Aorta (tissue), 5 donors: ENCODE measurements at regions of chr19 and their contacts with region 1.

Region 1: DNA sequence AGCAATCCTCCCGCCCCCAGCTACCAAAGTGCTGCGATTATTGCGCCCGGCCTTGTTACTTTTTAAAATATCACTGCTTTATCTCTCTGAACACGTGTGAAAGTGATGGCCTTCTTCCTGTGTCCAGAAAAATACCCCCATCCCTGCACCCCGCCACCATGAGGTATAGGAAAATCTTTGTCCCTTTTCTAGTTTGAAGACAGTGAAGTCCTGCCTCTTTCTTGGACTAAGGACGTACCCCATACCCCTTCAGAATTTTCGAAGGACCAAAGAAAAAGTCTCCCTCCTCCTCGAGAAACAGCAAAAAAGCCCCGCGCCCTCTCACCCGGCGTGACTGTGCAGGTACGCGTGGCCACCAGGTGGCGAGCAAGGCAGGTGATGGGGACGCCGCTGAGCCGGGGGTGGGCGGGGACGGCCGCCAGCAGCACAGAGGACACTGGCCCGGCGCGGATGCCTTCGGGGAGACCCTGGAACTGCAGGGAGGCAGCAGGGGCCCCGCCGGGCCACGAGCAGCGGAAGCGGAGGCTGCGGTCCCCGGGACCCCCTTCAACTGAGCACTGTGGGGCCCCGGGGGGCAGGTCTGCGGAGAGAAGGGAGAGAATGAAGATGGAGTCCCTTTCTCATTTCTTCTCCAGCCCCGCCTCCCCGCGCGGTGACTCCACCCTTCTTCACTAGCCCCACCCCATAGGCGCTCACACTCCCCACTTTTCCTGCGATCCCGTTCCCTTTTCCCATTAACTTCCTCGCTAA is 3.2 kb downstream of the VSIG10L start:
- DNase-seq: peak; percentile 89 to 96
- ATAC-seq: peak; percentile 87
- H3K4me3 ChIP-seq: peak overlapping the region; percentile 7 to 16
- H3K27ac ChIP-seq: peak overlapping the region in 1 of 2 donors; percentile 8
- H3K4me1 ChIP-seq: no peaks in the 10 kb centered on the region
- H3K27me3 ChIP-seq: no peaks in the 10 kb centered on the region

Region 2: DNA sequence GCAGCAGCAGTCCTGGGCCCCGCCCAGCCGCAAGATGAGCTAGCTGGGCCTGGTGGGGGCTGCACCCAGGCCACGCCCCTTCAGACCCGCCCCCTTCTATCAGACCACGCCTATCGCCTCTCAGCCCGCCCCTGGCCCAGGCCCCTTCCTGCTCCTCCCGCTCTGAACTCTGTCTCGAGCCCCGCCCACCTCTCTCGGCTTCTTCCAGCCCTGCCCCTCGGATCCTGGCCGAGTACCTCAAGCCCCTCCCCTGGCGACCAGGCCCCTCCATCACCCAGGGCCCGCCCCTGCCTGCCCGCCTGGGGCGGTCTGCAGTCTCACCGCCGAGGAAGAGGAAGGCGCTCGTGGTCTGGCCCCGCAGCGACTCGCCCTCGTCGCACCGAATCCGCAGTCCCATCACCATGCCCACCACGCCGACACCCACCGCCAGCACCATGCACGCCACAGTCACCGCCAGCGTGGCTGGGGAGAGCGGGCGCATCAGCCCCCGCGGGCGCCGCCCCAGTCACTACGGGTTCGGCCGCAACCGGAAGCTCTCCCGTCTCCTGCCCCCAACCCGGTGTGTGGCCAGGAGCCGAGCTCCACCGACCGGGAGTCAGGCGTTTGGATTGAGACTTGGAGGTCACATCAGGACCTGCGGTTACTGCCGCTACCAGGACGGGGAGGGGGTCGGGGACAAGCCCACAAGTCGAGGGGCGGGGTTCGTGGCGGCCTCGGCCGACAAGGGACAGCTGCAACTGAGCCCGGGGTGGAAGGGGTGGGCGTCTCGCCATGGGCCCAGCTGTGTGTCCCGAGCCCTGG is 29.0 kb after region 1 on chr19:
- intact Hi-C with region 1: loop called (anchors 1 to 2 kb)
- DNase-seq: peak; percentile 100
- ATAC-seq: peak; percentile 96
- H3K4me3 ChIP-seq: peak overlapping the region; percentile 4 to 65
- H3K27ac ChIP-seq: peak overlapping the region in 1 of 2 donors; percentile 4
- H3K4me1 ChIP-seq: no peaks in the 10 kb centered on the region
- H3K27me3 ChIP-seq: no peaks in the 10 kb centered on the region

Region 3: GRCh38 chr19:51393959-51394836 is 55.5 kb after region 1 on chr19:
- intact Hi-C with region 1: loop called (anchors 5 kb)
- DNase-seq: peak; percentile 95 to 96
- ATAC-seq: peak; percentile 96
- H3K4me3 ChIP-seq: peak overlapping the region; percentile 13 to 30
- H3K27ac ChIP-seq: peak overlapping the region in 1 of 2 donors; percentile 7
- H3K4me1 ChIP-seq: no peaks in the 10 kb centered on the region
- H3K27me3 ChIP-seq: no peaks in the 10 kb centered on the region

Region 4: DNA sequence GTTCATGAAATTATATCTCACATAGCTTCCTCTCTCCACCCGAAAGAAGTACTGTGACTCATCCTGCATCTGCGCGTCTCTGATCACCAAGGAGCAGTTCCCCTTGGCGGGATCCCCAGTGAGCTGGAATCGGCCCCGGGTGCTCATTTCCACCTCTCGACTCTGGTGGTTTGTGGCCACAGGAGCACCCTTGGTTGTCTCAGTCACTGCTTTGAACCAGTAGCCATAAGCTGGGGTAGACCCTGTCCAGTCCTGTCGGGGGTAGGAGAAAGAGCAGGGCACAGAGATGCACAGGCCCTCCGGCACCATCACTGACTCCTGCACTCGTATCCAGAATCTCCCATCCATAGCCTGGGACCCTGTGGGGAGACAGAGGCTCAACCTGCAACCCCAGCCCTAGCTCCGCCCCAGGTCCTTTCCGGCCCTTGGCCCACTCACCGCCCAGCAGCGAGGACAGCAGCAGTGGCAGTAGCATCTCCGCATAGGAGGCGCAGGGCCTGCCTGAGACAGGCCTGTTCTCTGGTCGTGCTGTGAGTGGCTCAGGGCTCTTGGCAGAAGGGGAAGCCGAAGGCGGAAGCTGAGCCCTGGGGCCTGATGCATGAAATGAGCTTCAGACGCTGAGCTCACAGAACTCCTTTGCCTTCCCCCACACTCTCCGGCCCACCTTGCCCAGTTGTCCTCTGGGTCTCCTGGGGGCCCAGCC is 78.5 kb after region 1 on chr19 and contains the start of gene SIGLEC10:
- intact Hi-C with region 1: no loop called
- DNase-seq: peak; percentile 80 to 84
- ATAC-seq: peak; percentile 19
- H3K4me3 ChIP-seq: no peak within 1 kb of the TSS
- H3K27ac ChIP-seq: no peak within 1 kb of the TSS
- H3K4me1 ChIP-seq: no peaks in the 10 kb centered on the region
- H3K27me3 ChIP-seq: no peaks in the 10 kb centered on the region
- total RNA-seq, gene SIGLEC10: 4.0 to 4.6 TPM

Region 5: GRCh38 chr19:51439021-51439465 is 100.3 kb after region 1 on chr19:
- intact Hi-C with region 1: loop called (anchors 2 kb)
- DNase-seq: no peak
- ATAC-seq: no peak
- H3K4me3 ChIP-seq: no peak overlapping the region
- H3K27ac ChIP-seq: no peak overlapping the region
- H3K4me1 ChIP-seq: no peaks in the 10 kb centered on the region
- H3K27me3 ChIP-seq: no peaks in the 10 kb centered on the region

Region 6: GRCh38 chr19:51552996-51553725 is 214.4 kb after region 1 on chr19:
- intact Hi-C with region 1: no loop called
- DNase-seq: peak; percentile 78 to 89
- ATAC-seq: no peak
- H3K4me3 ChIP-seq: no peak overlapping the region
- H3K27ac ChIP-seq: no peak overlapping the region
- H3K4me1 ChIP-seq: no peaks in the 10 kb centered on the region
- H3K27me3 ChIP-seq: no peaks in the 10 kb centered on the region

Region 7: DNA sequence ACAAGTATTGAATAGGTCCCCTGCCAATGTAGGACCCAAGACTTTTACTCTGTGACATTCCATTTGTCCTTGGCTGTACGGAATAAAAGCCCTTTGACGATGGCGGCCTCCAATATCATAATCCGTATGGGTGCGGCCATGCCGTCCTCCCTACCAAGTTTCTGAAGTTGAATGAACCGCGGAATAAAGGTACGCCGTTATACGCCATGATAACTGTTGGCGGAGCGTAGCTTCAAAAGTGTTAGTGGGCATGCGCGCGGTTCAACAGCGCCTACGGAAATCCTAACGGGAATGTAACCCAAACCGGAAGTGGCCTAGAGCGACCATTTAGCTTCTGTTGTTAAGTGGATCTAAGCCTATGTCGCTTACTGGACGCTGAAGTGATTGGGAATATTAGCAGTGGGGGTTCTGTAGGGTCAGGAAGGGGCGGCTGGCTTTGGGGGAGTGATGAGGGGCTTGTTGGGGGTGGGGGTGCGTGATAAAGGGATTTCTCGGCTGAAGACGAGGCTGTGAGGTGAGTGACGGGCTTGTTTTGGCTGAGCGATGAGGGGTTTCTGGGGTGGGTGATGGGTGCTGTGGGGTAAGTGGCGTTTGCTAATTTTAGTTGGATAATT is 232.3 kb after region 1 on chr19 and contains the start of gene ZNF175:
- intact Hi-C with region 1: loop called in 1 of 2 experiments (anchors 10 kb)
- DNase-seq: peak; percentile 95 to 98
- ATAC-seq: peak; percentile 98
- H3K4me3 ChIP-seq: peak within 1 kb of the TSS; percentile 84 to 94
- H3K27ac ChIP-seq: no peak within 1 kb of the TSS
- H3K4me1 ChIP-seq: peaks cover 2 to 4% of the 10 kb centered on the region in 2 donors
- H3K27me3 ChIP-seq: no peaks in the 10 kb centered on the region
- total RNA-seq, gene ZNF175: 15.1 to 16.6 TPM

Region 8: GRCh38 chr19:51654783-51655182 is 316.0 kb after region 1 on chr19:
- intact Hi-C with region 1: loop called in 1 of 2 experiments (anchors 5 kb)
- DNase-seq: no peak
- ATAC-seq: no peak
- H3K4me3 ChIP-seq: no peak overlapping the region
- H3K27ac ChIP-seq: no peak overlapping the region
- H3K4me1 ChIP-seq: no peaks in the 10 kb centered on the region
- H3K27me3 ChIP-seq: peaks cover 0 to 1% of the 10 kb centered on the region in 2 donors

Region 9: DNA sequence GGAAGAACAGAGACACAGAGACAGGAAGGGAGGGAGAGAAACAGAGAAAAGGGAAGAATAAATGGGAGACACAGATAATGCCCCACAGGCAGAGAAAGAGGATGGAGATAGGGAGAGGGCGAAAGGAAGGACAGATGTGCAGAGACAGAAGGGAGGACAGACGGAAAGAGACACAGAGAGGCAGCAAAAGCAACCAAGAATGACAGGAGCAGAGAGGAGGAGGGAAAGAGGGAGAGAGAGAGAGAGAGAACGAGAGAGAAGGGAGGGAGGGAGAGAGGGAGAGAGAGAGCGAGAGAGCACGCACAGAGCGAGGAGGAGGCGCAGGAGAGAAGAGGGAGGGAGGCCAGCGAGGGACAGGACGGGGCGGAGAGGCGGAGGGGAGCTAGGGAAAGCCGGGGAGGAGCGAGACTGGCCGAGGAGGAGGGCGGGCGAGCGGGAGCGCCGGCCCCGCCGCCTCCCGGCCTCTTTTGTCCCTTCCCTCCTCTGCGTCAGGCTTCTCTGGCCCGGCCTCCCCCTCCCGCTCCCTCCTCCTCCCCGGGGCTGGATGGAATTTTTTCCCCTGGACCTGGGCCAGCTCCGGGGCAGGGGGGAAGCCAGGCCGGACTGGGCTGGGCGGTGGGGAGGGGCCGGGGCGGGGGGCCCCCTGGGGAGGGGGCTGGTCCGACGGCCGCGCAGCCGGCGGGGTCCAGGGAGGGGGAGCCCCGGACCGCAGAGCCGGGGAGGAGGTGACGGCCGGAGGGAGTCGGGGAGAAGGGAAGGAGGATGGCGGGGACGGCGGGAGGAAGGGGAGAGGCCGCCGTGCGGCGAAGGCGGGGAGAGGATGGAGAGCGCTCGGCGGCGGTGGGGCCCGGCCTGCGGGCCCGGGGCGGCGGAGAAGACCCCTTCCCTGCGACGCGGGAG is 350.2 kb after region 1 on chr19:
- intact Hi-C with region 1: loop called in 1 of 2 experiments (anchors 10 kb)
- DNase-seq: peak; percentile 94 to 98
- ATAC-seq: peak; percentile 95
- H3K4me3 ChIP-seq: peak overlapping the region; percentile 55 to 86
- H3K27ac ChIP-seq: peak overlapping the region; percentile 79 to 84
- H3K4me1 ChIP-seq: no peaks in the 10 kb centered on the region
- H3K27me3 ChIP-seq: no peaks in the 10 kb centered on the region